GM10248 (cell line): ENCODE measurements at regions of chr7 and their contacts with region 1.

Region 1: DNA sequence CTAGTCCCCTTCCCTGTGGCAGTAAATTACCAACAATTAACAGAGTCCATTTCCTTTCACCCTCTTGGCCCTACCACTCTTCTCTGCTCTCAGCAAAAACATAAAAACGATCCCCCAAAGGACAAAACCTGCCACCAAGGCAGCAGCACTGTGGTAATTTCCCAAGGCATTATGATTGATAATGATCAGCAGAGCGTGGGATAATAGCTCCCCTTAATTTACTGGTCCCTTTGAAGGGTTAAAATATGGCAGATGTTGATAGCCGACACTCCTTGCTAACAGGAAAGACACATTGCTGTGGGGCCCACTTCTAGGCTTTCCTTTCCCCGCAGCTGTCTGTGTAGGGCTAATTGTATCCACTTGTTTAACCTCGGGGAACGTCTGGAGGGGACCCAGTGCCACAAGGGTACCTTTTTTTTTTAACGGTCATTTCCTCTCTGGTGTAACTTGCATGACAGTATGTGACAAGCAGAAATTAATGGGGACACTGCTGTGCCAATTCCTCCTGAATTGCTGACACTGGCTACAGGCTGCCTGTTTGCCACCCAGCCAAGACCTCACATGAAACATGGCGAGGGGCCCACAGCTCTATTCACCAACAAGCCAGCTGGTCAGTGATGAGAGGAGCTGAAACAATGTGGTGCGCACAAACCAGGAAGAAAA is 81.3 kb downstream of the CDK6 start:
- DNase-seq: no peak
- CTCF ChIP-seq: no peak

Region 2: GRCh38 chr7:92598310-92598981 is 156.6 kb before region 1 on chr7:
- CTCF ChIA-PET with region 1: no interaction called
- POLR2A ChIA-PET with region 1: no interaction called
- DNase-seq: no peak
- CTCF ChIP-seq: no peak

Region 3: GRCh38 chr7:92768501-92769393 is 13.7 kb after region 1 on chr7:
- CTCF ChIA-PET with region 1: interaction called, 26 read pairs
- POLR2A ChIA-PET with region 1: no interaction called
- DNase-seq: peak; percentile 36
- CTCF ChIP-seq: no peak

Region 4: GRCh38 chr7:92809397-92810241 is 54.6 kb after region 1 on chr7:
- CTCF ChIA-PET with region 1: no interaction called
- POLR2A ChIA-PET with region 1: no interaction called
- DNase-seq: peak; percentile 57
- CTCF ChIP-seq: no peak